ENCODE measurements at regions of chr5 and their contacts with region 1.

Region 1: DNA sequence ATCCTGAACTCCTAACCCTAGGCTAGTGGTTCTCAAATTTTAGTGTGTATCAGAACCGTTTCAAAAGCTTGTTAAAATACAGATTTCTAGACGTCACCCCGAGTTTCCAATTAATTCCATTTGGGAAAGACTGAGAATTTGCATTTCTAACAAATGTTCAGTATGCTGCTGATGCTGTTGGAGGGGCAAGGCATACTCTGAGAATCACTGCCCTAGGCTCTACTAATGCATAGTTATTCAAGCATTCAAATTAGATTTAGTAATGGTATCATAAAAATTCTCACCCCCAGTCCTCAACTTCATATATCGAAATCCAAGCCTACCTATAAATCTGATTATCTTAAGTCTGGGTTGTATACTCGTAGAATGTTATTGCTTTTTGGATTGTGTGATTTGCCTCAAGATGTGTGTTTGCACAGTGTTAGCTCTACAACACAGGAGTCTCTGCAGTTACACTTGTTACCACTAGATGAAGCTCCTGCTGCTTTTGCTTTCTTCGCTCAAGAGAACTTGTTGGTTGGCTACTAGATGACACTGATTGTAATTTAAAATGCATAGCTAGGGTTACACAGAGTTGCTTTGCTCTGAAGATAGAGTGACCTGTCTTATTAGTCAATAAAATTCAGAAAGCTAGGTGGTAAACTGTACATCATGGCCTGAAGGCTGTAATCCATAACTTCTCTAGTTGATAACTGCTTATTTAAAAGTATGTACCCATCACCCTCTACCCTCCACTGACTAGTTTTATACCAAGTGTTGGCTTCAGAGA is 7.5 kb upstream of the ERAP2 start:
- DNase-seq: no peak
- ATAC-seq: peak; percentile 86
- H3K4me3 ChIP-seq: no peak overlapping the region
- H3K27ac ChIP-seq: no peak overlapping the region
- H3K4me1 ChIP-seq: peaks cover 28% of the 10 kb centered on the region
- H3K27me3 ChIP-seq: no peaks in the 10 kb centered on the region
- CTCF ChIP-seq: peak; percentile 99 to 100 (median 100); a peak in 5 of 6 replicates
- EP300 ChIP-seq: no peak
- POLR2A ChIP-seq: no peak
- RAD21 ChIP-seq: peak; percentile 100

Region 2: DNA sequence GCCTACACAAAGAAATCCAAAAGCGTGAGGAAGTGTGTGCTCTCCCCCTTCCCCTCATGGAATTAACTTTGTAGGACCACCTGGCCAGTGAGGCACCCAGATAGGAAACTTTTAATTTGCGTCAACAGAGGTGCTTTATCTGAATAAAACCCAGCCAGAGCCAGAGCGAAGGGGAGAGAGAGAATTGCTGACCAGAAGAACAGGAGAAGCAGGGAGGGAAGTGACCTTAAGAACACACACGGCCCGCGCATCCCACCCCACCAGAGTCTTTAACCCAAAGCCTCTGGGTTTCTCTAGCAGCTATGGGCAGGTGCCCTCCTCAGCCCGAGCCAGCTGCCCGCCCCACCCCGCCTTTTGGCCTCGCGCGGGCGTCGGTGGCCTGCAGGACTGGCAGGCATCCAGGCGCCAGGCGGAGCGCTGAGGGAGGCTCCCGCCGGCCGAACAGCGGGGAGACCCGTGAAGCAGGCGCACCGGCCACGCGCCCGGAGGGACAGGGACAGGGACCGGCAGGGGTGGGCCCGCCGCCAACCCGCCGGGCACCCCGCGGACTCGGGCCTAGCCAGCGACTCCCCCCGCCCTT is 61.6 kb before region 1 on chr5:
- CTCF ChIA-PET with region 1: interaction called, 50 read pairs
- POLR2A ChIA-PET with region 1: interaction called, 21 read pairs
- RAD21 ChIA-PET with region 1: interaction called, 28 read pairs
- SMC1A ChIA-PET with region 1: interaction called, 30 read pairs
- in situ Hi-C with region 1: no loop called
- intact Hi-C with region 1: loop called (anchors 2 kb)
- DNase-seq: no peak
- ATAC-seq: peak; percentile 65
- H3K4me3 ChIP-seq: peak overlapping the region; percentile 76
- H3K27ac ChIP-seq: peak overlapping the region; percentile 95
- H3K4me1 ChIP-seq: peaks cover 3% of the 10 kb centered on the region
- H3K27me3 ChIP-seq: no peaks in the 10 kb centered on the region
- CTCF ChIP-seq: no peak
- EP300 ChIP-seq: no peak
- POLR2A ChIP-seq: no peak
- RAD21 ChIP-seq: 0 out of 2 replicates have a peak, but pooled peaks have one; percentile 2

Region 3: DNA sequence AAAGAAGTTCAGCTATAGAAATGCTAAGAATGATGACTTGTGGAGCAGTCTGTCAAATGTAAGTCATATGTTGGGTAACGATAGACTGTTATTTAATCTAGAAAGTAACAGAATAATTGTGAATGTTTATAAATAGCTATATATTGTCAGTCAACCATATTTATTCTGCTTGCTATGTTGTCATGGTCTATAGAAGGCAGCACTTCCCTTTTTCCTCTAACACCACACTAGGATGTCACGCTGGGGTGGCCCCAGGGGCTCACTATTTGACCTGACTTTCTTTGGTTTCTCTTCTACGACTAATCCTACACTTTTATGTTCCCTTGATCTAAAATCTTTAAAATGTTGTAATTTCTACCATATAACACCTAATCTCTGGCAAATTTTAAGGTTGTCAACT is 28.0 kb after region 1 on chr5:
- CTCF ChIA-PET with region 1: interaction called, 167 read pairs
- POLR2A ChIA-PET with region 1: interaction called, 13 read pairs
- RAD21 ChIA-PET with region 1: interaction called, 134 read pairs
- SMC1A ChIA-PET with region 1: interaction called, 140 read pairs
- in situ Hi-C with region 1: no loop called
- intact Hi-C with region 1: loop called (anchors 1 kb)
- DNase-seq: no peak
- ATAC-seq: peak; percentile 98
- H3K4me3 ChIP-seq: 0 out of 2 replicates have a peak overlapping the region, but pooled peaks have one; percentile 15
- H3K27ac ChIP-seq: peak overlapping the region; percentile 68
- H3K4me1 ChIP-seq: peaks cover 10% of the 10 kb centered on the region; the same call in 1 of the 2 replicates
- H3K27me3 ChIP-seq: no peaks in the 10 kb centered on the region
- CTCF ChIP-seq: peak in 1 of 3 experiments; percentile 33; a peak in 2 of 6 replicates
- EP300 ChIP-seq: peak; percentile 56 to 64; a peak in 2 of 4 replicates
- POLR2A ChIP-seq: no peak
- RAD21 ChIP-seq: peak; percentile 31; the same call in 1 of the 2 replicates

Region 4: GRCh38 chr5:96957254-96958049 is 88.7 kb after region 1 on chr5:
- CTCF ChIA-PET with region 1: interaction called, 25 read pairs
- POLR2A ChIA-PET with region 1: interaction called, 8 read pairs
- RAD21 ChIA-PET with region 1: interaction called, 136 read pairs
- SMC1A ChIA-PET with region 1: interaction called, 74 read pairs
- in situ Hi-C with region 1: no loop called
- intact Hi-C with region 1: no loop called
- DNase-seq: peak; percentile 45
- ATAC-seq: peak; percentile 73
- H3K4me3 ChIP-seq: peak overlapping the region; percentile 72
- H3K27ac ChIP-seq: peak overlapping the region; percentile 84
- H3K4me1 ChIP-seq: peaks cover 32% of the 10 kb centered on the region
- H3K27me3 ChIP-seq: no peaks in the 10 kb centered on the region
- CTCF ChIP-seq: no peak
- EP300 ChIP-seq: 0 out of 4 replicates have a peak, but pooled peaks of 1 of the 2 experiments have one; percentile 43
- POLR2A ChIP-seq: no peak
- RAD21 ChIP-seq: no peak

Region 5: GRCh38 chr5:96990102-96990501 is 121.3 kb after region 1 on chr5:
- CTCF ChIA-PET with region 1: interaction called, 109 read pairs
- POLR2A ChIA-PET with region 1: no interaction called
- RAD21 ChIA-PET with region 1: interaction called, 24 read pairs
- SMC1A ChIA-PET with region 1: interaction called, 104 read pairs
- in situ Hi-C with region 1: no loop called
- intact Hi-C with region 1: loop called (anchors 5 kb)
- DNase-seq: no peak
- ATAC-seq: no peak
- H3K4me3 ChIP-seq: no peak overlapping the region
- H3K27ac ChIP-seq: no peak overlapping the region
- H3K4me1 ChIP-seq: no peaks in the 10 kb centered on the region
- H3K27me3 ChIP-seq: no peaks in the 10 kb centered on the region
- CTCF ChIP-seq: no peak
- EP300 ChIP-seq: no peak
- POLR2A ChIP-seq: no peak
- RAD21 ChIP-seq: no peak

Region 6: GRCh38 chr5:97037819-97038218 is 169.0 kb after region 1 on chr5:
- CTCF ChIA-PET with region 1: interaction called, 88 read pairs
- POLR2A ChIA-PET with region 1: interaction called, 3 read pairs
- RAD21 ChIA-PET with region 1: interaction called, 9 read pairs
- SMC1A ChIA-PET with region 1: interaction called, 49 read pairs
- in situ Hi-C with region 1: no loop called
- intact Hi-C with region 1: no loop called
- DNase-seq: no peak
- ATAC-seq: no peak; the same call in 2 of the 3 replicates
- H3K4me3 ChIP-seq: no peak overlapping the region
- H3K27ac ChIP-seq: no peak overlapping the region
- H3K4me1 ChIP-seq: no peaks in the 10 kb centered on the region
- H3K27me3 ChIP-seq: no peaks in the 10 kb centered on the region
- CTCF ChIP-seq: no peak
- EP300 ChIP-seq: no peak
- POLR2A ChIP-seq: no peak
- RAD21 ChIP-seq: no peak